Activated CD4-positive, alpha-beta T cell treated with anti-CD3 and anti-CD28 coated beads for 36 hours (primary cell): ENCODE measurements at regions of chr7 and their contacts with region 1.

Region 1: GRCh38 chr7:128343554-128344430 is at the start of gene RBM28:
- DNase-seq: peak; percentile 90
- ATAC-seq: peak; percentile 96
- H3K4me3 Mint-ChIP-seq: peak within 1 kb of the TSS; percentile 84
- H3K27ac Mint-ChIP-seq: peak within 1 kb of the TSS; percentile 91
- H3K4me1 Mint-ChIP-seq: peaks cover 25% of the 10 kb centered on the region
- H3K27me3 Mint-ChIP-seq: peaks cover 9% of the 10 kb centered on the region
- total RNA-seq, gene RBM28: 55.0 to 55.2 TPM

Region 2: DNA sequence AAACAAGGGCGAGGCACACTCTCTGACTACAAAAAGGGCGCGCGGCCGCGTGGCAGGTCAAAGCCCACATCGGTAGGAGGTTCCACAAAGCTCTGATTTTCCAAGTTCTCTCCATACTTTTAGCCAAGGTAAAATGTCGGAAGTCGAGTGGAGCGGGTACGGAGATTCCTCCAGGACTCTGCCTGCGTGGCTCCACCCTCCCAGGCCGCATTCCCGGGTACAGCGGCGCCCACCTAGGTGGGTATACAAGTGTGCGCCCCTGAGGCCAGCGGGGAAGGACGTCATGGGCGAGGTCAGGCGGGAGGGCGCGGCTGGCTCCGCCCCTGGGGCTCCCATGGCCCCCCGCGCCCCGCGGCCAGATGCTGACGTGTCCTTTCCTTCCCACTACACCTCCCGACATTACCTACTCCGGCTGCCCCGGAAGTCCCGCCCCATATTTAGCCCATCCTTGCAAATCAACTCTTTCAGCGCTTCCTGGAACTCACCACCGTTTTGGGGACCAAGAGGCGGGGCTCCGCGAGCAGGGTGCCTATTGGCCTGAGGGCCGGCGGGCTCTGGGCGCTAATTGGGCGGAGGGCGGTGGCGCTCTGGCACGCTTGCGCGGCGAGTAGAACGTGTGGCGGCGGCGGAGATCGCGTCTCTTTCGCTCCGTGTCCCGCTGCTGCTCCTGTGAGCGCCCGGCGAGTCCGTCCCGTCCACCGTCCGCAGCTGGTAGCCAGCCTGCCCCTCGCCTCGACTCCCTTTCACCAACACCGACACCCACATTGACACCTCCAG is 692.0 kb before region 1 on chr7 and contains the start of gene SND1:
- CTCF ChIA-PET with region 1: no interaction called
- POLR2A ChIA-PET with region 1: no interaction called
- intact Hi-C with region 1: loop called in 1 of 2 experiments (anchors 1 kb)
- DNase-seq: peak; percentile 99
- ATAC-seq: peak; percentile 94
- H3K4me3 Mint-ChIP-seq: no peak within 1 kb of the TSS
- H3K27ac Mint-ChIP-seq: peak within 1 kb of the TSS; percentile 99
- H3K4me1 Mint-ChIP-seq: peaks cover 37% of the 10 kb centered on the region
- H3K27me3 Mint-ChIP-seq: no peaks in the 10 kb centered on the region
- total RNA-seq, gene SND1: 193 to 214 TPM

Region 3: DNA sequence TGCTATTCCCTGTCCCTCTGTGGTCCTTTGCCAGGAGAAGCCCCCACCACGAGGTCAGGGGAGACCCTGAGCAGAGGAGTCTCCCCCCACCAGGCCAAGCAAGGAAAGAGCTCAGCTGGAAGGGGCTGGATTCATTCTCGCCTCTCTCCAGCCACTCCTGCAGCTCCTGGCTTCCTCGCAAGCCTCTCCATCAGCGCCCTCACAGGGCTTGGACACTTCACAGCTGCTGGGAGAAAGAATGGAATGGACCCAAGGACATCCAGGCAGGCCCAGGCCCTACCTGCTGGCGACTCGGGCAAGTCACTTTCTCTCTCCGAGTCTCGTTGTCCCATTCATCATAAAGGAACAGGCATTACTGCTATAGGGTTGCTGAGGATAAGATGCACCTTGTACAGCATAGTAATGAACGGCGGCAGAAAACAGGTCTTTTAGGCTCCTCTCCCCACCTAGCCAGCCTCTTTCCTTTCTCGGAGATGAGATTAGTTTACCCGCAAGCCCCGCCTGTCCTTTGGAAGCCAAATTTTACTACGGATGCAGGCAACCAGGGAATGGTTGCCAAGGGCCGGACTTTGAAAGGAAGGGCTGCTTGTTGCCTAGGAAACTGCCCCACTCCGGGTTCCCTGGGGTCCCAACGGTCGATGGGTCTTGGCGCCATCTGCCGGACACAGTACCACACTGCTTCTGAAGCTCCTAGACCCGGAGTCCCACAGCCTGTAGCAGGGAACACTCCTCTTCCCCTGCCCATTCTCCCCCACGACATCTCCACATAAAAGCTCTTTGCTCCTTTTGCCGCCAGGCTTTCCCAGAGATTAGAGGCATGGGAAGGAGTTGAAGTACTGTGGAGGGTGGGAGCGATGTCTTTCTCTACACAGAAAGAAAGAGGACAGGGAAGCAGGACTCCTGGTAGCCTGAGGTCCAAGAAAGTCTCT is 43.7 kb after region 1 on chr7:
- CTCF ChIA-PET with region 1: interaction called, 321 read pairs
- POLR2A ChIA-PET with region 1: interaction called, 4 read pairs
- intact Hi-C with region 1: loop called (anchors 1 kb)
- DNase-seq: peak; percentile 84
- ATAC-seq: peak; percentile 83
- H3K4me3 Mint-ChIP-seq: no peak overlapping the region
- H3K27ac Mint-ChIP-seq: no peak overlapping the region
- H3K4me1 Mint-ChIP-seq: peaks cover 2% of the 10 kb centered on the region
- H3K27me3 Mint-ChIP-seq: no peaks in the 10 kb centered on the region

Region 4: DNA sequence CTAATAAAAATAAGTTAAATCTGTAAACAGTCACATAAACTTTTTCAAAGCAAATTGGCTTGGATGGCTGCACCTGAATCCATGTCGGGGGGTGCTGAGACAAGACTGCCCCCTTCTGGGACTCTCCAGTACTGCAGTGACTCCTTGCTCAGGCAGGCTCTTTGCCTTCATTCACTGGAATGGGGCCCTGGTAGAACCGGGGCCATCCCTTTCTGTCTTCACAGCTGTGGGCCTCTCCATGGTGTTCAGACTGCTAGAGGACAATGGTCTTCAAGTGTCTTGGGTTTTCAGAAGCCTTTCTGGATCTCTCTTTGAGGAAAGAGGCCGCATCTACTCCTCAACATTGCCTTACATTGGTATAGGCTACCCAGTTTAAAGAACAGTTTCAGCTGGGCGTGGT is 82.1 kb after region 1 on chr7:
- CTCF ChIA-PET with region 1: interaction called, 61 read pairs
- POLR2A ChIA-PET with region 1: no interaction called
- intact Hi-C with region 1: loop called in 1 of 2 experiments (anchors 1 kb)
- DNase-seq: peak; percentile 91
- ATAC-seq: peak; percentile 82
- H3K4me3 Mint-ChIP-seq: no peak overlapping the region
- H3K27ac Mint-ChIP-seq: no peak overlapping the region
- H3K4me1 Mint-ChIP-seq: no peaks in the 10 kb centered on the region
- H3K27me3 Mint-ChIP-seq: peaks cover 12% of the 10 kb centered on the region

Region 5: DNA sequence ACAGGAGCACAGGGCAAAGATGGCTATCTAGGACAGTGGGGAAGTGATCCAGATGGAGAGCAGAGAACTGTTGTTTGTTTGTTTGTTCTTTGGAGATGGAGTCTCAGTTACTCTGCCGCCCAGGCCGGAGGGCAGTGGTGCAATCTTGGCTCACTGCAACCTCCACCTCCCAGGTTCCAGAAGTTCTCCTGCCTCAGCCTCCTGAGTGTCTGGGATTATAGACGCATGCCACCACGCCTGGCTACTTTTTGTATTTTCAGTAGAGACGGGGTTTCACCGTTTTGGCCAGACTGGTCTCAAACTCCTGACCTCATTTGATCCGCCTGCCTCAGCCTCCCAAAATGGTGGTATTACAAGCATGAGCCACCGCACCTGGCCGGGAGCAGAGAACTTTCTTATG is 153.6 kb after region 1 on chr7:
- CTCF ChIA-PET with region 1: no interaction called
- POLR2A ChIA-PET with region 1: no interaction called
- intact Hi-C with region 1: no loop called
- DNase-seq: no peak
- ATAC-seq: no peak
- H3K4me3 Mint-ChIP-seq: no peak overlapping the region
- H3K27ac Mint-ChIP-seq: no peak overlapping the region
- H3K4me1 Mint-ChIP-seq: no peaks in the 10 kb centered on the region
- H3K27me3 Mint-ChIP-seq: no peaks in the 10 kb centered on the region

Region 6: DNA sequence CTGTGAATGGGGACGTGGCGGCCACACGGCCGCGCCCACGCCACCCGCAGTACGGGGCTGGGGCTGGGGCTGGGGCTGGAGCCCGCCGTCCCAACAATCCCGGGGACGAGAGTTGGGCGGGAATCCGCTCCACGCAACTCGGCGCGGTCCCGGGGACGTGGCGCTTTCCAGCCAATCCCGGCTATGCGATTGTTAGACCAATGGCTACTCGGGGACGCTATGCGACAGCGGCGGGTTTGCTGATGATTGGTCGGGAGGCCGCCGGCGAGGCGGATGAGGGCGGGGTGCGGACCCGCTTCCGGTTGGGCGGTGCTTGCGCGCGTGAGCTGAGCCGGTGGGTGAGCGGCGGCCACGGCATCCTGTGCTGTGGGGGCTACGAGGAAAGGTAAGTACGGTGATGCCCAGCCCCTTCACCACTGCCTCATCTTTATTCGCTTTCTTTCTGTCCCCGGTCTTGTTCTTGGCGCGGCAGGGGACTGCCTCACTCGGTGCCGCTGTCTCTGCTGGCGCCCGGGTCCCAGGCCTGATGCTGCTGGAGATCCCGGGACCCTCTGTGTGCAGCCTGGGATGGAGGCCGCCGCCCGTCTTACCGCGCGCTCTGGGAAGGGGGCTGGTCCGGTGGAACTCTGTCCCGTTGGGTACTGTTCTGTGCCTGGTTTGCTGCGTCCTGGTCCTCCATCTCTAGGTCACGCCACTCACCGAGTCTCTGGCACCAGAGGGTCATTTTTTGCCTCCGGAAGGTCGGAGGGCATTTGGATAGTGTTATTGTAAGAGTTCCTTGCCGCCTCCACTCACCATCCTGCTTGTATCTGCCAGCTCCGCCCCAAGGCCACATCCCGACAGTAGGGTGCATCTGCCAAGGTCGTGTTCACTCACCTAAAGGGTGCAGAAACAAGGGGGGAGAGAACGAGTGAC is 395.5 kb after region 1 on chr7 and contains the start of gene CALU:
- CTCF ChIA-PET with region 1: no interaction called
- POLR2A ChIA-PET with region 1: no interaction called
- intact Hi-C with region 1: loop called in 1 of 2 experiments (anchors 1 kb)
- DNase-seq: peak; percentile 97
- ATAC-seq: peak; percentile 98
- H3K4me3 Mint-ChIP-seq: peak within 1 kb of the TSS; percentile 99
- H3K27ac Mint-ChIP-seq: peak within 1 kb of the TSS; percentile 93
- H3K4me1 Mint-ChIP-seq: peaks cover 38% of the 10 kb centered on the region
- H3K27me3 Mint-ChIP-seq: peaks cover 3% of the 10 kb centered on the region
- total RNA-seq, gene CALU: 32.9 to 33.8 TPM